ENCODE measurements at regions of chr1 and their contacts with region 1.

Region 1: DNA sequence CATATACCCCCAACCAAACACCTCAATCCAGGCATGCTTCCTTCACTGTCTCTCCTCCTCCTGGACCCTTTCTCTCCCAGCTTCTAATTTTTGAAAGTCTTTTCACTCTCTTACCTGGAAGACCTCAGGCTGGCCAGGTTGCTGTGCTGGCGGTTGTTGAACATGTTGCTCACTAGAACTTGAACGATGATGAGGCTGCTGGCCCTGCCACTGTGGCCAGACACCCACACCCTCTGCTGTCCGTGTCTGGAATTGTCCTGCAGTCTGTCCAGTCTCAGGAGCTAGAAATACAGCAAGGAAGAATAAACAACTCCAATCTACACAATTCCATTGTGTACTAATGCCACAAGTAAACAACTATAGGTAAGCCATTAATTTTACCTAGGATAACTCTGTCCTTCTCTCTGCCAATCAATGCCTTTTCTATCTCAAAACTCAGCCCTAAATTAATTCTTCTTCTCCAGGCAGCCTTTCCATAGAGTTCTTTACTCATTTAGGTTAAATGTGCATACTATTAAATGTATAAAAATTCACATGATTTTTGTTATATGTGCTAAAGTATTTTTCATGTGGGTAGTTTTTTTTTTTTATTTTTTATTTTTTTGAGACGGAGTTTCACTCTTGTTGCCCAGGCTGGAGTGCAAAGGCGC is 5.1 kb upstream of the CTSK start:
- DNase-seq: peak; percentile 67
- H3K4me3 ChIP-seq: no peak overlapping the region
- H3K27ac ChIP-seq: no peak overlapping the region
- H3K27me3 ChIP-seq: no peaks in the 10 kb centered on the region
- CTCF ChIP-seq: peak; percentile 92

Region 2: GRCh38 chr1:150629115-150629928 is 183.9 kb before region 1 on chr1 and contains the start of gene ENSA:
- in situ Hi-C with region 1: loop called (anchors 25 kb)
- DNase-seq: peak; percentile 100
- H3K4me3 ChIP-seq: peak within 1 kb of the TSS; percentile 84
- H3K27ac ChIP-seq: peak within 1 kb of the TSS; percentile 92
- H3K27me3 ChIP-seq: no peaks in the 10 kb centered on the region
- CTCF ChIP-seq: no peak

Region 3: DNA sequence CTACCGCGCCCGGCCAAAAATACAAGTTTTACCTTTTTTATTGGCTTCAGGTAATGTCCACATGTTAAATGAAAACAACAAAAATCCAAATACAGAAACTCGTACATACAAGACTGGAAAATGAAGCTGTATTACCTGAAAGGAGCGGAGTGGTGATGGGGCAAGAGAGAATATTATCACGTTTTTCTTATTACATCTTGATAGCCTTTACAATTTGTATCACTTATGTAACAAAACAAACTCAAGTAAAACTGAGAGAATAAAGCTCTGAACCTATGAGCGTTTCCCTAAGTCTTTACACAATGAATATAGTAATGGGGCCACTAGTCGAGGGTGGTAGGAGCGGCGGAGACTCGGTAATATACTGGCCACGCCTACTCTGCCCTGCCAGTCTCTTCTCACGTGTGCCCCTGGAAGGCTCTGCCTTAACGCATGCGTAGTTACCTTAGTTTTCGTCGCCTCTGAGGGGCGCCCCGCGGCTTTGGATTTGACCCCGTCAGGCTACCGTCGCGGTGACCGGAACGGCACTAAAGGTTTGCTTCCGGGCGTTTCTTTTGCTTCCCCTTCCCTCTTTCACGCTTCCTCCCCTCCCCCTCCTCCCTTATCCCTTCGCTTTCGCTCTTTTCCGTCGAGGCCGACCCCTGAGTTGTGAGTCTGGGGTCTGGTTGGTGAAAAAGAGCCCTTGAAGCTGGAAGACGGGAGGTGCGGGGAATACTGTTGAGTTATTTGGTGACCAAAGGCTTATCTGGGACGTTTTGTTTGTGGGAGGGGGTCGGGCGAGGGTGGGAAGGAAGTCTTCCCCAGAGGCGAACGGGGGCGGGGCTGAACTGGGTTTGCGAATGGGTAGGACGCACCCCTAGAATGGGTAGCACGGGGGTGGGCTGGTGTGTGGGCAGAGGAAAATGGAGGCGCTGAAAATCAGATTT is 112.9 kb after region 1 on chr1 and contains the start of gene SETDB1:
- in situ Hi-C with region 1: loop called (anchors 25 kb)
- DNase-seq: peak; percentile 93
- H3K4me3 ChIP-seq: peak within 1 kb of the TSS; percentile 87
- H3K27ac ChIP-seq: peak within 1 kb of the TSS; percentile 84
- H3K27me3 ChIP-seq: no peaks in the 10 kb centered on the region
- CTCF ChIP-seq: peak; percentile 21

Region 4: GRCh38 chr1:151254217-151255213 is 441.3 kb after region 1 on chr1 and contains the start of gene PSMD4:
- in situ Hi-C with region 1: no loop called
- DNase-seq: peak; percentile 94
- H3K4me3 ChIP-seq: peak within 1 kb of the TSS; percentile 71
- H3K27ac ChIP-seq: peak within 1 kb of the TSS; percentile 96
- H3K27me3 ChIP-seq: no peaks in the 10 kb centered on the region
- CTCF ChIP-seq: peak; percentile 12

Measured in brain microvascular endothelial cell (primary cell).